ENCODE measurements at regions of chr4 and their contacts with region 1.

Region 1: GRCh38 chr4:109424093-109424841 is 9.3 kb upstream of the SEC24B start:
- DNase-seq: no peak
- ATAC-seq: no peak
- H3K4me3 ChIP-seq: no peak overlapping the region
- H3K4me1 ChIP-seq: peaks cover 5% of the 10 kb centered on the region
- CTCF ChIP-seq: no peak

Region 2: GRCh38 chr4:109815151-109816081 is 391.1 kb after region 1 on chr4 and contains the start of gene GAR1:
- intact Hi-C with region 1: loop called (anchors 10 kb)
- DNase-seq: peak; percentile 92 to 97 (median 95)
- ATAC-seq: peak; percentile 99
- H3K4me3 ChIP-seq: peak within 1 kb of the TSS; percentile 46
- H3K4me1 ChIP-seq: peaks cover 7% of the 10 kb centered on the region
- CTCF ChIP-seq: no peak
- total RNA-seq, gene GAR1: 10.3 to 15.9 (median 11.5) TPM

Region 3: GRCh38 chr4:109826719-109827118 is 402.5 kb after region 1 on chr4:
- intact Hi-C with region 1: loop called in 1 of 2 experiments (anchors 10 kb)
- DNase-seq: no peak
- ATAC-seq: peak; percentile 44
- H3K4me3 ChIP-seq: no peak overlapping the region
- H3K4me1 ChIP-seq: no peaks in the 10 kb centered on the region
- CTCF ChIP-seq: no peak

Region 4: GRCh38 chr4:109977854-109978501 is 553.7 kb after region 1 on chr4:
- intact Hi-C with region 1: loop called in 1 of 2 experiments (anchors 5 kb)
- DNase-seq: peak in 1 of 3 donors; percentile 45
- ATAC-seq: peak; percentile 42
- H3K4me3 ChIP-seq: no peak overlapping the region
- H3K4me1 ChIP-seq: peaks cover under 1% of the 10 kb centered on the region
- CTCF ChIP-seq: peak; percentile 44

Measured in mucosa of descending colon (tissue), 3 donors.